ENCODE measurements at regions of chr9 and their contacts with region 1.

Region 1: DNA sequence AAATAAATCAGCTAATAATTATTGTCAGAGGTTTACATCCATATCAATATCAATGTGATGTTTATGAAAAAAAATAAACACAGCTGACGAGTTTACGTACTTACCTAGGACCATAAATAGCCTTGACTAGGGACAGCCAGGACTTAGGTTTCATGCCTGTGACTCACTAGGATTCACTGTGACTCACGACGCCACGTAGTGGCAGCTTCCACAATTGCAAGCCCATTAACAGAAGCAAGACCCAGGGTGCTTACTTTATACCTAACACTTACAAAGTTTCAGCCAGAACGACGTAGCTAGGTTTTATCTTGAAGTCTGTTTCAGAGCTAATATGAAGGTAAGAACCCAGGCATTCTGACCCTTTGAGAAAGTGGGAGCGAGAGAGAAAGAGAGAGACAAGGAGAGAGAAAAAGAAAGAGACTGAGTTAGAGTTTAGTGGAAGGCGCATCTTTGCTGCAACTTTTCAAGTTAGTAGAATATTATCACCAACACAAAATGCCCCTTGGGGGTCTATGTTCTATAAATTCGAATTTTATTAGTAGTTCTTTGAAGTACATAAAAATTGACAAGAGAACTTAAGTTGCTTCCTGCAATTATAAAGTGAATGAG is 191.2 kb downstream of the GNA14 start:
- H3K4me3 ChIP-seq: no peak overlapping the region
- H3K27ac ChIP-seq: no peak overlapping the region
- H3K4me1 ChIP-seq: no peaks in the 10 kb centered on the region
- CTCF ChIP-seq: peak; percentile 34; the same call in 1 of the 2 replicates

Region 2: DNA sequence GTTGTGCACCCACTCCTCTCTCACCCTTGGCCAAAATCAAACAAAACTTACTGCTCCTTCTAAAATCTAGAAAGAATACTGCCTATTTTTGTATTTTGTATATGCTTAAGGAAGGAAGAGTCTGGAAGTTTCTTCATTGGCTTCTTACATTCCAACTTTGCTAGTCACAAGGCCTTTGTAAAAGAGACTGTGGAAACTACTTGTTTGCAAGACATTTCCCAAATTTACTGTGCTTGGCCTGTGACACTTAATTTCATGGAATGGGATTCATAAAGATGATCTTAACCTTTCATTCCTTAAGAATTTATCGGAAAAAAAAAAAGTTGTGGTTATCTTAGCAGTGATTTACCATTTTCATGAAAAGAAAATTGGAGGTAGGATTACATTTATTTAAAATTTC is 70.7 kb before region 1 on chr9:
- CTCF ChIA-PET with region 1: no interaction called
- POLR2A ChIA-PET with region 1: no interaction called
- H3K4me3 ChIP-seq: no peak overlapping the region
- H3K27ac ChIP-seq: no peak overlapping the region
- H3K4me1 ChIP-seq: no peaks in the 10 kb centered on the region
- CTCF ChIP-seq: no peak

Region 3: DNA sequence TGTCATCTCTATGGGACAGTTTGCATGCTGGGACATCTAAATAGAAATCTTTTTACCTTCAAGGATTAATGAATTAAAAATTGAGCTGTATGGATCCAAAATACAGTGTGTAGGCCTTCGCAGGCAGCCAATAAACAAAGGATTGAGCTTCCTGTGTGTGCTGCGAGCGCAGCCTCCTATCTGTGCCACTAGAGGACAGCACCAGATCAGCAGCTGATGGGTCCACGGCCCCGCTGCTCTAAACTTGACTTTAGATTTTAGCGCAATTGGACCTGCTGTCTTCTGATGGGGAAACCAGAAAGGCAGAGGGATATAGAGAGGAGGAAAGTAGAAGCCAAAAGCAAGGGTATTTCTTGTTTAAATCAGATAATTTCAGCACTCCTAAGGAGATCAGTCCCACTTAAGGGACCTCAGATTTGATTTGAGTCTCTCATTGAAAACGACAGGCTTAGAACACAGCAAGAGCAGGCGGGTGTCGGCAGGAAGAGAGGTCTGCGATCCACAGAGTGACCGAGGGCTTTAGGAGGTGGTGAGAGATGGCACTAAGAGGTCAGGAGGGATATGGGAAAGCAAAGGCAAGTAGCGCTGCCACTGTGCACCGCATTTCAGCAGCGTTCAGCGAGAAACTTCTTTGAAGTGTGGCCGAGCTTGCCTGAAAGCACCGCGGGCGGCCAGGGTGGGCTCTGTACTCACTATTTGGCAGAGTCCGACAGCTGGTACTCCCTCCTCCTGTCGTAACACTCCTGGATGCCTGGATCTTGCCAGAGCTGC is 23.1 kb before region 1 on chr9:
- CTCF ChIA-PET with region 1: interaction called, 55 read pairs
- POLR2A ChIA-PET with region 1: interaction called, 3 read pairs
- H3K4me3 ChIP-seq: no peak overlapping the region
- H3K27ac ChIP-seq: no peak overlapping the region
- H3K4me1 ChIP-seq: no peaks in the 10 kb centered on the region
- CTCF ChIP-seq: peak; percentile 70

Region 4: GRCh38 chr9:77469515-77470231 is 12.7 kb after region 1 on chr9:
- CTCF ChIA-PET with region 1: interaction called, 59 read pairs
- POLR2A ChIA-PET with region 1: no interaction called
- H3K4me3 ChIP-seq: no peak overlapping the region
- H3K27ac ChIP-seq: no peak overlapping the region
- H3K4me1 ChIP-seq: no peaks in the 10 kb centered on the region
- CTCF ChIP-seq: no peak

Region 5: GRCh38 chr9:77502568-77502967 is 45.6 kb after region 1 on chr9:
- CTCF ChIA-PET with region 1: interaction called, 10 read pairs
- POLR2A ChIA-PET with region 1: no interaction called
- H3K4me3 ChIP-seq: no peak overlapping the region
- H3K27ac ChIP-seq: no peak overlapping the region
- H3K4me1 ChIP-seq: no peaks in the 10 kb centered on the region
- CTCF ChIP-seq: no peak

Region 6: DNA sequence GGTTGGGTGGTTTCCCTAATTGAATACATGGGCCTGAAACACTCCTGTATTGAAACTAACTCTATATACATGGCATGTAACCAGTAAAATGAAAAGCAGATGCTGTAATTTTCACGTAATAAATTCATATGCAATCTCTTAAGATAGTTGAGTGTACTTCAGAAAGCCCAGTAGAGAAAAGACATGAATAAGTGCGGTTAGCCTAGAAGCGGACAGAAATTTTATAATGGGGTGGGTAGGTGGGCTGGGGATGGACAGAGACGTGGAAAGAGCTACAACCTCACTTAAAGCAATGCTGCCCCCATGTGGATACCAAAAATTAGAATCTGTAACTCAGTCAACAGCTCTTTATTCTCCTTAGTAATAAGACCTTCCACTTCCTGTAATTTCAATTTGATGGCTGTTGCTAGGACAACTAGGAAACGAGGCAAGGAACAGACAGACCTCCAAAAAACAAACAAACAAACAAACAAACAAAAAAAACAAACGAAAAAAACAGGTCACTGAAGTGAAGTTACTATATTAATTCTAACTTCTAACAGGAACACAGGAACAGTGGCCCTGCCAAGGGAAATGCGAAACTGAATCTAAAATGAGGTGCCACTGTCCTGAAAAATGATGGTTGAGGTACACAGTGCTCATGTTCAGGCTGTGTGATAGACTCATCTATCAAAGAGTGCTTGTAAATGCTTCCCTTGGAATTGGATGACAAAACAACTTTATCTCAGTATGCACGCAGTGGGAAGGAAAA is 294.6 kb after region 1 on chr9:
- CTCF ChIA-PET with region 1: interaction called, 33 read pairs
- POLR2A ChIA-PET with region 1: no interaction called
- H3K4me3 ChIP-seq: no peak overlapping the region
- H3K27ac ChIP-seq: no peak overlapping the region
- H3K4me1 ChIP-seq: no peaks in the 10 kb centered on the region
- CTCF ChIP-seq: peak; percentile 41

Region 7: GRCh38 chr9:78121488-78121887 is 664.6 kb after region 1 on chr9:
- CTCF ChIA-PET with region 1: interaction called, 26 read pairs
- POLR2A ChIA-PET with region 1: no interaction called
- H3K4me3 ChIP-seq: no peak overlapping the region
- H3K27ac ChIP-seq: no peak overlapping the region
- H3K4me1 ChIP-seq: no peaks in the 10 kb centered on the region
- CTCF ChIP-seq: no peak